H1 (cell line): ENCODE measurements at regions of chr7 and their contacts with region 1.

Region 1: GRCh38 chr7:131604841-131605279 is 48.4 kb upstream of the PODXL start:
- DNase-seq: peak in 1 of 2 experiments; percentile 88
- H3K4me3 ChIP-seq: peak overlapping the region; percentile 6 to 47 (median 11); a peak in 5 of 8 replicates
- H3K27ac ChIP-seq: peak overlapping the region; percentile 96
- H3K4me1 ChIP-seq: peaks cover 27 to 51% (median 45%) of the 10 kb centered on the region in 4 experiments
- H3K27me3 ChIP-seq: no peaks in the 10 kb centered on the region
- CTCF ChIP-seq: no peak
- EP300 ChIP-seq: no peak
- POLR2A ChIP-seq: peak in 1 of 2 experiments; percentile 13; a peak in 2 of 3 replicates
- RAD21 ChIP-seq: no peak

Region 2: GRCh38 chr7:131568970-131569369 is 35.9 kb before region 1 on chr7:
- CTCF ChIA-PET with region 1: no interaction called
- POLR2A ChIA-PET with region 1: interaction called, 18 read pairs
- DNase-seq: no peak
- H3K4me3 ChIP-seq: no peak overlapping the region
- H3K27ac ChIP-seq: no peak overlapping the region
- H3K4me1 ChIP-seq: peaks cover 0 to 3% (median 2%) of the 10 kb centered on the region in 4 experiments; a peak in 2 of 7 replicates
- H3K27me3 ChIP-seq: no peaks in the 10 kb centered on the region
- CTCF ChIP-seq: no peak
- EP300 ChIP-seq: no peak
- POLR2A ChIP-seq: no peak
- RAD21 ChIP-seq: no peak

Region 3: DNA sequence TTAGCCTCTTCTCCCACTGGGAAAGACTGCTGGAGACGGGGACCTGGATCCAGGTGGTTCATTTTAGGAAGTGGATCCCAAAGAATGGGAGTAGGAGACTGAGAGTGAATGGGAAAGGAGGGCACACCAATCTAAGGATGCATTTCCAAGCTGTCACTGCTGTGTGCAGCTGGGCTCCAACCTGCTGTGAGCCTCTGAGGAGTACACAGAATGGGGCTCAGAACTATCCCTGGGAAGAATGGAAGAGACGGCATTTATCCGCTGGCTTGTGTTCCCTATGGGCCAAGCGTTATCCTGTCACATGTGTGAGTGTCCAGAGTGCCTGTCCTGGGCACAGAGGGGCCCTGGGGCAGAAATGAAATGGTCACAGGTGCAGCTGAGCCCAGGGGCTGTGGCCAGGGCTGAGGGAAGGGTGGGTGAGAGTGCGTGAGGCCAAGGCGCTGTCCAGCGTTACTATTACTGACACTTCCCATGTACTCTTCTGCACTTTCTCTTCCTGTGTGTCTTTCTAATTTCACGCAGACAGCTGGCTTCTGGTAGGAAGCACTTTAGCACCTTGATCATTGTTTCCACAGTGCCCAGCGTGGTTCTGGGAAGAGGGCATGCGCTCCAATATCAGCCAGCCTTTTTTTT is 13.1 kb before region 1 on chr7:
- CTCF ChIA-PET with region 1: interaction called, 6 read pairs
- POLR2A ChIA-PET with region 1: interaction called, 19 read pairs
- DNase-seq: no peak
- H3K4me3 ChIP-seq: no peak overlapping the region
- H3K27ac ChIP-seq: no peak overlapping the region
- H3K4me1 ChIP-seq: peaks cover 0 to 10% (median 3%) of the 10 kb centered on the region in 4 experiments; a peak in 5 of 7 replicates
- H3K27me3 ChIP-seq: 0 out of 7 replicates have a peak, but pooled peaks cover 0 to 3% (median 0%) of the 10 kb centered on the region in 4 experiments
- CTCF ChIP-seq: no peak
- EP300 ChIP-seq: no peak
- POLR2A ChIP-seq: no peak
- RAD21 ChIP-seq: no peak

Region 4: GRCh38 chr7:131625817-131626372 is 21.0 kb after region 1 on chr7:
- CTCF ChIA-PET with region 1: interaction called, 26 read pairs
- POLR2A ChIA-PET with region 1: interaction called, 57 read pairs
- DNase-seq: peak; percentile 76 to 82
- H3K4me3 ChIP-seq: no peak overlapping the region; a peak in 1 of 8 replicates
- H3K27ac ChIP-seq: peak overlapping the region; percentile 53; the same call in 1 of the 2 replicates
- H3K4me1 ChIP-seq: peaks cover 7 to 22% (median 15%) of the 10 kb centered on the region in 4 experiments
- H3K27me3 ChIP-seq: no peaks in the 10 kb centered on the region
- CTCF ChIP-seq: peak in 2 of 3 experiments; percentile 12 to 34; a peak in 3 of 4 replicates
- EP300 ChIP-seq: no peak; a peak in 1 of 3 replicates
- POLR2A ChIP-seq: no peak
- RAD21 ChIP-seq: peak in 1 of 2 experiments; percentile 20; a peak in 2 of 4 replicates

Region 5: GRCh38 chr7:131745390-131746248 is 140.8 kb after region 1 on chr7:
- CTCF ChIA-PET with region 1: no interaction called
- POLR2A ChIA-PET with region 1: no interaction called
- DNase-seq: peak in 1 of 2 experiments; percentile 86
- H3K4me3 ChIP-seq: no peak overlapping the region
- H3K27ac ChIP-seq: no peak overlapping the region
- H3K4me1 ChIP-seq: peaks cover 0 to 7% (median 0%) of the 10 kb centered on the region in 4 experiments; a peak in 1 of 7 replicates
- H3K27me3 ChIP-seq: no peaks in the 10 kb centered on the region
- CTCF ChIP-seq: no peak
- EP300 ChIP-seq: no peak
- POLR2A ChIP-seq: no peak
- RAD21 ChIP-seq: 0 out of 4 replicates have a peak, but pooled peaks of 1 of the 2 experiments have one; percentile 2